ENCODE measurements at regions of chr1 and their contacts with region 1.

Region 1: GRCh38 chr1:156751758-156752757 is 583 bp upstream of the HDGF start:
- DNase-seq: peak; percentile 97
- ATAC-seq: peak; percentile 83
- H3K4me3 Mint-ChIP-seq: peak overlapping the region; percentile 92
- H3K27ac Mint-ChIP-seq: peak overlapping the region; percentile 95
- H3K4me1 Mint-ChIP-seq: peaks cover 26% of the 10 kb centered on the region
- H3K27me3 Mint-ChIP-seq: no peaks in the 10 kb centered on the region
- CTCF ChIP-seq: no peak

Region 2: DNA sequence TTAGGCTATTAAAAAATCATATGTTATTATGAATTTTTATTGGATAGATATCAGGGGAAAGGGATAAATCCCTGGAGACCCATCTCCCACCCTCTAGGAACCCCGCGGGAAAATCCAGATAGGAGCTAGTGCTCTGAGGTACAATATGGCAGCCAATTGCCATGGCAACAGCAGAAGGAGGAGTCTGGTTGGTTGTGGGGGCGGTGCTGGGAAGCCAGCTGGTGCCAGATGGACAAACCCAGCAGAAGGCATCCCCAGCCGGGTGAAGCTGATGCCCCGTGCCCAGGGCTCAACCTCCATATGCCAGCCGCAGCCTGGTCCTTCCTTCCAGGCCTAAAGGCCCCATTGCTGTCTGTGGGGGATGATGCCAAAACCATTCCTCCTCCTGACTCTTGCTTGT is 344.7 kb before region 1 on chr1:
- CTCF ChIA-PET with region 1: no interaction called
- POLR2A ChIA-PET with region 1: no interaction called
- intact Hi-C with region 1: no loop called
- DNase-seq: no peak
- ATAC-seq: no peak
- H3K4me3 Mint-ChIP-seq: no peak overlapping the region
- H3K27ac Mint-ChIP-seq: no peak overlapping the region
- H3K4me1 Mint-ChIP-seq: no peaks in the 10 kb centered on the region
- H3K27me3 Mint-ChIP-seq: peaks cover 29% of the 10 kb centered on the region
- CTCF ChIP-seq: no peak

Region 3: GRCh38 chr1:156740679-156741612 is 11.1 kb before region 1 on chr1 and contains the start of gene MRPL24:
- CTCF ChIA-PET with region 1: interaction called, 4 read pairs
- POLR2A ChIA-PET with region 1: interaction called, 53 read pairs
- intact Hi-C with region 1: no loop called
- DNase-seq: peak; percentile 99
- ATAC-seq: peak; percentile 89
- H3K4me3 Mint-ChIP-seq: peak within 1 kb of the TSS; percentile 98
- H3K27ac Mint-ChIP-seq: peak within 1 kb of the TSS; percentile 95
- H3K4me1 Mint-ChIP-seq: peaks cover 50% of the 10 kb centered on the region
- H3K27me3 Mint-ChIP-seq: no peaks in the 10 kb centered on the region
- CTCF ChIP-seq: no peak
- total RNA-seq, gene MRPL24: 84.2 to 93.6 TPM

Region 4: GRCh38 chr1:156767101-156767878 is 15.2 kb after region 1 on chr1 and contains the start of gene PRCC:
- CTCF ChIA-PET with region 1: interaction called, 6 read pairs
- POLR2A ChIA-PET with region 1: interaction called, 41 read pairs
- intact Hi-C with region 1: loop called (anchors 2 kb)
- DNase-seq: peak; percentile 99
- ATAC-seq: peak; percentile 94
- H3K4me3 Mint-ChIP-seq: no peak within 1 kb of the TSS
- H3K27ac Mint-ChIP-seq: no peak within 1 kb of the TSS
- H3K4me1 Mint-ChIP-seq: peaks cover 34% of the 10 kb centered on the region
- H3K27me3 Mint-ChIP-seq: no peaks in the 10 kb centered on the region
- CTCF ChIP-seq: no peak
- total RNA-seq, gene PRCC: 69.8 to 70.6 TPM